RWPE1 (cell line): ENCODE measurements at regions of chr19 and their contacts with region 1.

Region 1: DNA sequence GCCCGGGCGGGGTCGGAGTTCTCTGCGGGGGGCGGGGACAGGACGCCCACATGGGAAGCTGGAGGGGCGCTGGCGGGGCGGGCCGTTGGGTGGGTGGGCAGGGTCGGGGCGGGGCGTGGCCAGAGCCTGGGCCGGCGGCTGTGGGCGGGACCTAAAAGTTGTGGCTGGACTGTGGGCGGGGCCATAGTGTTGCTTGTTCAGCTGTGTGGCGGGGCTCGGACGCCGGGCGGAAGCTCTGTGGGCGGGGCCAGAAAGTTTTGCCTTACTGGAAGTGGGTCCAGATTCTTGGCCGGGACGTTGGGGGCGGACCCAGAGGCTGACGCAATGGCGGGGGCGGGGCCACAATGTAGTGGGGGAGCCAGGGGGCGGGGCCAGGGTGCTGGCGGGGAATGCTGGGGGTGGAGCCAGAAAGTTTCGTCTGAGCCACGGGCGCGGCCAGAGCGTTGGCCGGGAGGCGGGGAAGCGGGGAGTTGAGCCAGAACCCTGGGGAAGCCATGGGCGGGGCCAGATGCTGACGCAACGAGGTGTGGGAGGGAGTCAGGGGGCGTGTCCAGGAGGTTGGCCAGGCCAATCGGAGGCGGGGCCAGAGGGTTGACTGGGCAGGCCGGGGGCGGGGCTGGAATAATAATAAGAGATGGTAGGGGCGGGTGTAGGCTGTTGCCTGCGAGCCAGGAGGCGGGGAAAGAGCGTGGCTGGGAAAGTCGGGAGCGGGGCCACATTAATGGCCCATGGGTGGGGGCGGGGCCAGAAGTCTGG is 541 bp downstream of the CCDC9 start:
- DNase-seq: peak; percentile 99
- H3K27ac ChIP-seq: peak overlapping the region; percentile 98
- CTCF ChIP-seq: no peak

Region 2: DNA sequence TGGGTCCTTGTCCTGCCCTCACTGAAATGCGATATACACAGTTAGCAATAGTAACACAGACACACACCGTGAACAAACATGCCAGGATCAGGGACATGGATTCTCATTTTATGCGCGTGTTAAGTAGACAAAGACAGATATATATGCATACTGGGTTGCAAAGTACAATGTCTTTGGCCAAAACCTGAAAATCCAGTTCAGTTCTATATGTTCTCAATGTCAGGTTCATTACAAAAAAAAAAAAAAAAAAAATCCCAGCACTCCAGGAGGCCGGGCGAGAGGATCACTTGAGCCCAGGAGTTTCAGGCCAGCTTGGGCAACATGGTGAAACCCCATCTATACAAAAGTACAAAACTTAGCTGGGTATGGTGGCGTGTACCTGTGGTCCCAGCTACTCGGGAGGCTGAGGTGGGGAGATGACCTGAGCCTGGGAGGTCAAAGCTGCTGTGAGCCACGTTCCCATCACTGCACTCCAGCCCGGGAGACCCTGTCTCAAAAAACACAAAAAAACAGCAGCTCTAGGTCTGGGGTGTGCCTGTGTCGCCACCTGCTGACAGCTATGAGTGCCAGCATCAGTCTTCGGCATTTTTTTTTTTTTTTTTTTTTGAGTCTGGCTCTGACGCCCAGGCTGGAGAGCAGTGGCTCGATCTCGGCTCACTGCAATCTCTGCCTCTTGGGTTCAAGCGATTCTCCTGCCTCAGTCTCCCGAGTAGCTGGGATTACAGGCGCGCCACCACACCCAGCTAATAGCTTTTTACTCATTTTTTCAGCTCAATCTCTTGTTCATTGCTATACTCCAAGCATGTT is 416.5 kb before region 1 on chr19:
- CTCF ChIA-PET with region 1: no interaction called
- POLR2A ChIA-PET with region 1: no interaction called
- DNase-seq: no peak
- H3K27ac ChIP-seq: peak overlapping the region; percentile 70
- CTCF ChIP-seq: peak; percentile 90

Region 3: DNA sequence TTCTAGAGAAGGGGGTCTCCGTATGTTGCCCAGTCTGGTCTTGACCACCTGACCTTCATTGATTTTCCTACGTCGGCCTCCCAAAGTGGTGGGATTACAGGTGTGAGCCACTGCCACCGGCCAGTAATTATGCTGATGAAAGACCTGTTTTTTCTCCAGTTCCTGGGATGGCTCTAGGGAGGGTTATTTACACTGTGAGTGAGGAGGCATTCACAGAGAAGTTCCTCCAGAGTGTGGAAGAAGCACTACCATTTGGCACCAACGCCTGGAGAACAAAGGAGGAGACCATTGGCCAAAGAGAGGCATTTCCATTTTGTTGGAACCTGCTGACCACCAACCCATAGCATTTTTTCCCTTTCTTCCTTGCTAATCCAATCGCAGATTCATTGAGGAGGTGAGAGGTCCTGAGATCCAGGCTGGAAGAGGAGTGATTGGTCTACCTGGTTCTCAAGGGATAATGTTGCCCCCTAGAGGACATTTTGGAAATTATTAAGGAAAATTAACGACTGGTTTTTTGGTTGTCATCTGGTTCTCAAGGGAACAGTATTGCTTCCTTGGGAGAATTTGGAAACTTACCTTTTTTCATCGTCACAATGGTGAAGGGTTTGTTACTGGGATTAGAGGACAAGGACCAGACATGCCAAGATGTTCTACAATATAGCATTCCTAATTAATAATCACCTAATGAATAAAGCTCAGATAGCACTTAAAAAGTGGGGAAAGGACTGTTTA is 131.8 kb before region 1 on chr19:
- CTCF ChIA-PET with region 1: no interaction called
- POLR2A ChIA-PET with region 1: no interaction called
- DNase-seq: peak; percentile 55
- H3K27ac ChIP-seq: no peak overlapping the region
- CTCF ChIP-seq: peak; percentile 69

Region 4: DNA sequence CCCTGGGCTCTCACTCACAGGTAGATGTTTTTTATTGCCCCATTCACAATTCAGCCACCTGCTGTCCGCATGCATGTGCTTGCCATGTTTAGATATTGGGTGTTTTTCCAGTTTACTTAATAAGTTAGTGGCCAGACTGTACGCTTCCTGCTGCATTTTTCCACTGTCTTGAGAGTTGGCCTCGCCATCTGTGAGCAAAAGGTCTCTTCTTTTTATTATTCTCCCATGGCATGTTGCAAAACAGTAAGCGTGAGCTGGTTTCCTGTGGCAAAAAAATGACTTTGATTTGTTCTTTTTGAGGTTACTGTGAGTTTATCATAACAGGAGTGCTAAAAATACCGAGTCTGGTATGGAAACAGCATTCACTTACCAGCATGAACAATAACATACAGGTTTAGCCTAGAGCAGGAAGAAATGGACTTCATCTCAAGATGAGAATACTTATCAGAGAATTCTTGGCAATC is 80.2 kb before region 1 on chr19:
- CTCF ChIA-PET with region 1: no interaction called
- POLR2A ChIA-PET with region 1: no interaction called
- DNase-seq: no peak
- H3K27ac ChIP-seq: peak overlapping the region; percentile 54
- CTCF ChIP-seq: no peak

Region 5: DNA sequence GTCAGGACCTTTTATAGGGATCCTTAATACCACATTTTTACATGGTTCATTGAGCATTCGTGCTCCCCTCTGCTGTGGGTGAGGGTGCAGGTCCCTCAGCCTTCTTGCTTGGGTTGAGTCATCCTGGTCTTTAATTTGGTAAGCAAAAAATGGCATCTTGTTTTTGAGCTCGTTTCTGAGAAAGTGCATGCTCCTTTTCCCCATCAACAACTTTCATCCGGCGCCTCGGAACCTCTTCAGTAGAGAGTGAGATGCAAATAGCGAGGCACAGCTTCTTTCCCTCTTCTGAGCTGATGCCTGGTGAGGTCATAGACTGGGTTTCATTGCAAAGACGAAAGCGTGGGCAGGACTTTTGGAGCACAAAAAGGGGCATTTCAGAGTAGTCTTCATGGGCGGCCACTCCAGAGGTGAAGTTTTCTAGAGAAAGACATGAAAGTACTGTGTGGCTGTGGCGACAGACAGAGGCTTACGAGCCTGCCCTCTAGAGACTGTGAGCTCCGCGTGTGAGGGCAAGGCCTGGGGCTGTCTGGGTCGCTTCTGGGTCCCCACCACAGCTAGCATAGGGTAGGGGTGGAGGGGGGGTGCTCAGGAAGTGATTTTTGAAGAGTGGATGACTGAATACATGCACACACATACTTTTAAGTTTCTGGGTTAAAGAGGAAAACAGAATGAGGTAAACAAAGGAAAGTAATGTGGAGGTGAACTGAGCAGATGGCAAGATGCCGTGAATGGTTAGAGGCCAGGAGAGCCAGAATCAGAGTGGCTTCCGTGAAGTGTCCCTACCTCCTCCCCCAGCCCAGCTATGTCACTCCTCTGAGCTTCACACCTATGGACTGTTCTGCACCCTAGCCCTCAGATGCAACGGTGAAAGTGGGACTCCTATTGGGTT is 70.2 kb before region 1 on chr19:
- CTCF ChIA-PET with region 1: no interaction called
- POLR2A ChIA-PET with region 1: no interaction called
- DNase-seq: no peak
- H3K27ac ChIP-seq: peak overlapping the region; percentile 54
- CTCF ChIP-seq: no peak

Region 6: DNA sequence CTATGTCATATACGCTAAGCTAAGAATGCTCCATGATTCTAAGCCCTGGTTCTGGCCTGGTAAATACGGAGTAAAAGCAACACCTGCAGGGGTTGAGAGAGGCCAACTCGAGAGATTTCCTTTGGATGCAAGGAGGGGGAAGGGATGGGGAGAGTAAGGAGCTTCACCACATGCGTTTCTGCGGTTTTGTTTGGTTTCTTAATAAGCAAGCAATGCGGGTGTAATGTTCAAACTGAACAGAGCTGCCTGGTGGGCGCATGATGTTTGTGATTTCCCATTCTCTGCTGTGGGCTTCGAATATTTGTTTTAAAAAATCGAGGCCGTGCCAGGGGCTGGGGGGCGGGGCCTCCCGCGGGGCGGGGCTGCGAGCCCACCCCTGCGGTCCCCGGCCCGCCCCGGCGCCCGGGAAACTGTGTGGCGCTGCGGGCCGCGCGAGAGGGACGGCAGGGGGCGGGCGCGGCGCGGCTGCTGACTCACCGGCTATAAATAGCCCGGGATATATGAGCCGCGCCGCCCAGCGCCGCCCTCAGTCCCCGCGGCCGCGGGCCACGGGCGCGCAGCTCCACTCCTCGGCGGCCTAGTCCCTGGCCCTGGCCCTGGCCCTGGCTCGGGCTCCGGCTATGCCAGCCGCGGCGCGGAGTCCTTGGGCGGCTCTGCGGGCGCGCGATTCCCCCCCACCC is 31.0 kb before region 1 on chr19:
- CTCF ChIA-PET with region 1: no interaction called
- POLR2A ChIA-PET with region 1: interaction called, 18 read pairs
- DNase-seq: peak; percentile 87
- H3K27ac ChIP-seq: peak overlapping the region; percentile 99
- CTCF ChIP-seq: peak; percentile 36